CD4-positive, alpha-beta T cell (primary cell): ENCODE measurements at regions of chr2 and their contacts with region 1.

Region 1: DNA sequence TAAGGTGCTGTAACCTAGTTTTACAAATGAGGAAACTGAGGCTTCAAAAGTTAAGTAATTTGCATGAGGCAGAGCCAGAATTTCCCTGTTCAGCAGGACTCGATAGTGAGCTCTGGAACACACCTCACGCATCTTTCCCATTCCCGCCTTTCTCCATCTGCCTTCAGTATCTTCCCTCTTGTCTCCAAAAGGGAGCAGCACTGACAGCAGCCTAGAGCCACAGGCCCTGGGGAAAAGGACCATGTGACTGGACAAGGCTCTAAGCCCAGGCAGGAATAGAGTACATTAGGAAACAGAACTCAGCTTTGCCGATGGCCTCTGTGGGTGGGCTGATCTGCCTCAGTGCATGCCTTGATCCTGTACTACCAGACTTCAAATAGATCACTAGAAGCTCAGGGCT is 21.5 kb downstream of the GPR155 start:
- DNase-seq: no peak
- ATAC-seq: no peak
- H3K4me3 ChIP-seq: no peak overlapping the region
- H3K4me3 Mint-ChIP-seq: no peak overlapping the region
- H3K27ac ChIP-seq: no peak overlapping the region
- H3K27ac Mint-ChIP-seq: no peak overlapping the region
- H3K4me1 ChIP-seq: no peaks in the 10 kb centered on the region
- H3K4me1 Mint-ChIP-seq: no peaks in the 10 kb centered on the region
- H3K27me3 ChIP-seq: no peaks in the 10 kb centered on the region
- H3K27me3 Mint-ChIP-seq: no peaks in the 10 kb centered on the region
- CTCF ChIP-seq: no peak

Region 2: GRCh38 chr2:174487108-174487819 is 21.9 kb after region 1 on chr2:
- CTCF ChIA-PET with region 1: interaction called, 17 read pairs
- POLR2A ChIA-PET with region 1: interaction called, 16 read pairs
- intact Hi-C with region 1: loop called in 1 of 2 experiments (anchors 2 kb)
- DNase-seq: peak; percentile 80 to 100 (median 98)
- ATAC-seq: peak; percentile 78
- H3K4me3 ChIP-seq: peak overlapping the region; percentile 83
- H3K4me3 Mint-ChIP-seq: peak overlapping the region; percentile 94
- H3K27ac ChIP-seq: peak overlapping the region; percentile 49 to 75
- H3K27ac Mint-ChIP-seq: peak overlapping the region; percentile 95
- H3K4me1 ChIP-seq: peaks cover 33% of the 10 kb centered on the region
- H3K4me1 Mint-ChIP-seq: peaks cover 82% of the 10 kb centered on the region
- H3K27me3 ChIP-seq: no peaks in the 10 kb centered on the region
- H3K27me3 Mint-ChIP-seq: no peaks in the 10 kb centered on the region
- CTCF ChIP-seq: no peak

Region 3: GRCh38 chr2:174522553-174522952 is 57.2 kb after region 1 on chr2:
- CTCF ChIA-PET with region 1: interaction called, 18 read pairs
- POLR2A ChIA-PET with region 1: interaction called, 12 read pairs
- intact Hi-C with region 1: loop called (anchors 1 kb)
- DNase-seq: peak in 3 of 14 experiments; percentile 27 to 40 (median 39)
- ATAC-seq: no peak
- H3K4me3 ChIP-seq: no peak overlapping the region
- H3K4me3 Mint-ChIP-seq: no peak overlapping the region
- H3K27ac ChIP-seq: no peak overlapping the region
- H3K27ac Mint-ChIP-seq: no peak overlapping the region
- H3K4me1 ChIP-seq: peaks cover 2% of the 10 kb centered on the region
- H3K4me1 Mint-ChIP-seq: peaks cover 17% of the 10 kb centered on the region
- H3K27me3 ChIP-seq: no peaks in the 10 kb centered on the region
- H3K27me3 Mint-ChIP-seq: no peaks in the 10 kb centered on the region
- CTCF ChIP-seq: peak; percentile 75

Region 4: DNA sequence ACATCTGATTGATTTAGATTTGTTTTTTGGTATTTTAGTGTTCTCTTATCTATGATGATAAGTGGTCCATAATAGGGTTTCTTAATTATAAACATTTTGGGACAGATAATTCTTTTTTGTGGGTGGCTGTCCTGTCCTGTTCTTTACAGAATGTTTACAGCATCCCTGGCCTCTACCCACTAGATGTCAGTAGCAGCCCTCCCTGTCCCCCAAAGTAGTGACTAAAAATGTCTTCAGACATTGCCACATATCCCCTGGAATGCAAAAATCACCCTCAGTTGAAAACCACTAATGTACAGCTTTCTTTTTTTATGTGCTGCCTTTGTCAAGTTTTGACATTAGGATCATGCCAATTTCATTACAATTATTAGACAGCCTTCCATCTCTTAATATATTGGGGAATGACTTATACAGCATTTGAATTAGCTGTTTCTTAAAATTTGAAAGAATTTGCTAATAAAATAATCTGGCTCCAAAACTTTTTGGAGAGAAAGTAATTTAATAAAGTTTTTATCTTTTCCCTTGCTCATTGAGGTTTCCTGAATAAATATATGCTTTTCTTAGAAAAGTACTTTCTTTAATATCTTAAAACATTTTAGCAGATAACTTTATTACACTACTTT is 112.8 kb after region 1 on chr2:
- CTCF ChIA-PET with region 1: interaction called, 9 read pairs
- POLR2A ChIA-PET with region 1: interaction called, 5 read pairs
- intact Hi-C with region 1: loop called in 1 of 2 experiments (anchors 1 kb)
- DNase-seq: peak in 12 of 14 experiments; percentile 26 to 85 (median 51)
- ATAC-seq: peak; percentile 82
- H3K4me3 ChIP-seq: no peak overlapping the region
- H3K4me3 Mint-ChIP-seq: no peak overlapping the region
- H3K27ac ChIP-seq: no peak overlapping the region
- H3K27ac Mint-ChIP-seq: peak overlapping the region; percentile 95
- H3K4me1 ChIP-seq: peaks cover 56% of the 10 kb centered on the region
- H3K4me1 Mint-ChIP-seq: peaks cover 94% of the 10 kb centered on the region
- H3K27me3 ChIP-seq: no peaks in the 10 kb centered on the region
- H3K27me3 Mint-ChIP-seq: no peaks in the 10 kb centered on the region
- CTCF ChIP-seq: peak; percentile 75

Region 5: GRCh38 chr2:174688079-174688478 is 222.8 kb after region 1 on chr2:
- CTCF ChIA-PET with region 1: interaction called, 29 read pairs
- POLR2A ChIA-PET with region 1: interaction called, 3 read pairs
- intact Hi-C with region 1: loop called (anchors 1 to 2 kb)
- DNase-seq: peak in 3 of 14 experiments; percentile 59 to 70 (median 69)
- ATAC-seq: peak; percentile 73
- H3K4me3 ChIP-seq: no peak overlapping the region
- H3K4me3 Mint-ChIP-seq: peak overlapping the region; percentile 0
- H3K27ac ChIP-seq: no peak overlapping the region
- H3K27ac Mint-ChIP-seq: peak overlapping the region; percentile 11
- H3K4me1 ChIP-seq: peaks cover 11% of the 10 kb centered on the region
- H3K4me1 Mint-ChIP-seq: peaks cover 14% of the 10 kb centered on the region
- H3K27me3 ChIP-seq: no peaks in the 10 kb centered on the region
- H3K27me3 Mint-ChIP-seq: no peaks in the 10 kb centered on the region
- CTCF ChIP-seq: peak; percentile 63